ENCODE measurements at regions of chr1 and their contacts with region 1.

Region 1: DNA sequence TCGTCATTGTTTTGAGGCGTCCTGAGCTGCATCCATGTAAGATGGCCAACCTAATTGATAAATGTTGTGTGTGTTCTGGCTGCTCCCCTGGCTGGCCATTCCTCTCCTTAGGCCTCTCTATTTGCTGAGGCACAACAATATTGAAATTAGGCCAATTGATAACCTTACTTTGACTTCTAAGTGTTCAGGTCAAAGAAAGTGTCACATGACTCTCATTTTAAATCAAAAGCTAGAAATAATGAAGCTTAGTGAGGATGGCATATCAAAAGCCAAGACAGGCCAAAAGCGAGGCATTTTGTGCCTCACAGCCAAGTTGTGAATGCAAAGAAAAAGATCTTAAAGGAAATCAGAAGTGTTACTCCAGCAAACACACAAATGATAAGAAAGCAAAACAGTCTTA is 12.7 kb downstream of the SYT6 start:
- DNase-seq: no peak
- H3K4me3 Mint-ChIP-seq: no peak overlapping the region
- H3K27ac Mint-ChIP-seq: no peak overlapping the region
- H3K4me1 Mint-ChIP-seq: no peaks in the 10 kb centered on the region
- H3K27me3 Mint-ChIP-seq: peaks cover 63% of the 10 kb centered on the region
- CTCF ChIP-seq: no peak

Region 2: GRCh38 chr1:114154963-114155322 is 14.0 kb after region 1 on chr1:
- CTCF ChIA-PET with region 1: no interaction called
- POLR2A ChIA-PET with region 1: no interaction called
- intact Hi-C with region 1: loop called (anchors 1 kb)
- DNase-seq: no peak
- H3K4me3 Mint-ChIP-seq: no peak overlapping the region
- H3K27ac Mint-ChIP-seq: no peak overlapping the region
- H3K4me1 Mint-ChIP-seq: no peaks in the 10 kb centered on the region
- H3K27me3 Mint-ChIP-seq: peaks cover 88% of the 10 kb centered on the region
- CTCF ChIP-seq: no peak

Measured in MCF 10A (cell line).